PC-9 (cell line): ENCODE measurements at regions of chr3 and their contacts with region 1.

Region 1: GRCh38 chr3:57998366-57999283 is 9.6 kb upstream of the FLNB start:
- DNase-seq: peak in 1 of 2 experiments; percentile 33
- H3K4me3 ChIP-seq: no peak overlapping the region
- H3K27ac ChIP-seq: peak overlapping the region; percentile 93
- H3K4me1 ChIP-seq: peaks cover 46% of the 10 kb centered on the region
- H3K27me3 ChIP-seq: no peaks in the 10 kb centered on the region
- CTCF ChIP-seq: no peak

Region 2: DNA sequence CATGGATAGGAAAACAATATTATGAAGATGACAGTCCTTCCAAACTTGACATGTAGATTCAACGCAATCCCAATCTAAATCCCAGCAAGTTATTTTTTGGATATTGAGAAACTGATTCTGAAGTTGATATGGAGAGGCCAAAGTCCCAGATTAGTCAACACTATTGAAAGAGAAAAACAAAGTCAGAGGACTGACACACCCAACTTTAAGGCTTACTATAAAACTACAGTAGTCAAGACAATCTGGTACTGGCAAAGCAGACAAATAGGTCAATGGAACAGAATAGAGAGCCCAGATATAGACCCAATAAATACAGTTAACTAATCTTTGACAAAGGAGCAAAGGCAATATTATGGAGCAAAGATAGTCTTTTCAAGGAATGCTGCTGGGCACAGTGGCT is 586.9 kb before region 1 on chr3:
- CTCF ChIA-PET with region 1: no interaction called
- POLR2A ChIA-PET with region 1: interaction called, 14 read pairs
- intact Hi-C with region 1: no loop called
- DNase-seq: no peak
- H3K4me3 ChIP-seq: no peak overlapping the region
- H3K27ac ChIP-seq: no peak overlapping the region
- H3K4me1 ChIP-seq: no peaks in the 10 kb centered on the region
- H3K27me3 ChIP-seq: no peaks in the 10 kb centered on the region
- CTCF ChIP-seq: no peak

Region 3: DNA sequence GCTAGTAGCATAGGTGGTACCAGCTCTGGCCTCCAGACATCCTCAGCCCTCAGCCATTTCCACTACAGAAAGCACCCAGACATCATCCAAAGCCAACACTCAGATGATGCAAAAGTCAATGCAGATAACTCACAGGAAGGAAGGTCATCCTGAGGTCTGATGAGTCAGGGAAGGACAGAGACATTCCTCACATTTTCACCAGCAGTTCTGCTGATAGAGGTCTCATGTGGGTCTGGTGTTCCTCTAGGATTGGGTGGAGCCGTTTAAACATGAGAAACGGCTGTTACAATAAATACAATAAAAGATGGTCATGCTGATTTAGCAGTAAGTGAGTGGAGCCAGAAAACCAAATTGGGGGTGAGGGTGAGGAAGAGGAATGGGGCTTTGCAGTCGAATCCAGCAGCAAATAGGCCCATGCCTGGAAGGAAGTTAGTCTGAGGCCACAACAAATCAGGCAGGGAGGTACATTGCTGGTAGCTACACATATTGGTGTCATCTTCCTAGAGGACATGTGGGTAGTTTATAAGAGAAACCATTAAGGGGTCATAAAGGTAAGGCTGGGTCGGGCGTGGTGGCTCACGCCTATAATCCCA is 23.7 kb before region 1 on chr3:
- CTCF ChIA-PET with region 1: no interaction called
- POLR2A ChIA-PET with region 1: interaction called, 15 read pairs
- intact Hi-C with region 1: loop called (anchors 1 kb)
- DNase-seq: peak; percentile 63 to 91
- H3K4me3 ChIP-seq: no peak overlapping the region
- H3K27ac ChIP-seq: peak overlapping the region; percentile 100
- H3K4me1 ChIP-seq: peaks cover 98% of the 10 kb centered on the region
- H3K27me3 ChIP-seq: no peaks in the 10 kb centered on the region
- CTCF ChIP-seq: no peak

Region 4: DNA sequence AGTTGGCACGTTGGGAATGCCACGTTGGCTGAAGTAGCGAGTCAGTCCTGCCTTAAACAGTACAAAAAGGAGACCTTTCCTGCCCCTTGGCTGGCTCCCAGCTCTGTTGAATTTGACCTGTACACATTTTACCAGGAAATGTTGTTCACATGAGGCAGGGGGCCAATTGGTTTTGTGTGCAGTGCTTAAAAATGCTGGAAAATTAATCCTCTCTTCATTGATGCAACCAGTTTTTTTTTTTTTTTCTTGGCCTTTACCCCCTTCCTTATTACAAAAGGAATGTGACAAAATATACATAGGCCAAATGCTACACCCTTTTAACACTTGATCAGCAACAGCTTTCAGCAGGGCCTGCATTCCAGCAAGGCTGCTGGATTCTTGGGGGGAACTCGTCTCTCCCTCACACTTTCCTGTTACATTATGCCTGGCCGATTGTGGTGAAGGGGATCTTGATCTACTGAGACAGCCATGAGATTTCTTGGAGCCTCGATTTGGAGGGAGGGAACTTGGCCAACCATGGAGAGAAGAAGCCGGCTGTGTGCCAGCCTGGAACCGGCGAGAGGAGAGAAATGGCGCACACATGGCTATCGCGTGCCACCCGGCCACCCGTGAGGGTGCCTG is 119.0 kb after region 1 on chr3:
- CTCF ChIA-PET with region 1: no interaction called
- POLR2A ChIA-PET with region 1: interaction called, 15 read pairs
- intact Hi-C with region 1: no loop called
- DNase-seq: peak in 1 of 2 experiments; percentile 37
- H3K4me3 ChIP-seq: no peak overlapping the region
- H3K27ac ChIP-seq: no peak overlapping the region
- H3K4me1 ChIP-seq: no peaks in the 10 kb centered on the region
- H3K27me3 ChIP-seq: no peaks in the 10 kb centered on the region
- CTCF ChIP-seq: no peak